H1 (cell line): ENCODE measurements at regions of chr22 and their contacts with region 1.

Region 1: DNA sequence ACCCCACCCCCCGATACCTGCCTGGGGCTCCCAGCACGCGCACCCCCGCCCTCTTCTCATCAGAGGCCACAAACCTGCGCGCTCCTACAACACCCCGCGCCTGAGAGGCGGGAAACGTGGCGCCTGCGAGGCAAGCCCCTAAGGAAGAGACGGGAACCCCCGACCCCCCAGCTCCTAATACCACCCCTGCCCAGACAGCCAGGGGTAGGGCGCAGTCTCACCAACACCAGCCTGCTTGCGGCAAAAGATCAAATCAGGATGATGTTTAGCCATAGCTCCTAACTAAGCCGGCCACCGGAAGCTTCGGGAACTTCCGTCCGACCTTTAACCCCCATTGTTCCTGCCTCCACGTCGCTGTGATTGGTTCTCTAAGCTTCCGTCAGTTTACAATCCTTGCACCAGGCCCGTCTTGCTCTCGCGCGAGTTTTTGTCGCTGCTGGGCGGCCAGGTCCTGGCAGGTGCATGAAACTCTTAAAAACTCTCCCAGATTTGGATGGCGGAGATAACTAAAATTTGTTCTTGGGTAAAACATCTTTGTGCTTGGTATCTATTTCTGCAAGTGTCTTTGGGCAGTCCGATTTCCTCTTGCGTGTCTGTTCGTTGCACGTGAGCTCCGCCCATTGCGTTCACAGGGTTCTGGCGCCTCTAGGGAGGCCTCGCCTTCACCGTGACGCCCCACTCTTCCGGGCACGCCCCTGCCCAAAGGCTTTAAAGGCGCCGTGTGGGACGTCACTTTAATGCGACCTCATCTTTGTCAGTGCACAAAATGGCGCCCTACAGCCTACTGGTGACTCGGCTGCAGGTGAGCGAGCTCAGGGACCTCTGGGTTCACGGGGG is at the starts of genes ACO2 and PHF5A:
- DNase-seq: peak; percentile 85 to 99
- H3K4me3 ChIP-seq: peak within 1 kb of the TSS; percentile 74 to 93 (median 80)
- H3K27ac ChIP-seq: peak within 1 kb of the TSS; percentile 98
- H3K4me1 ChIP-seq: peaks cover 0 to 9% (median 7%) of the 10 kb centered on the region in 4 experiments; a peak in 4 of 7 replicates
- H3K27me3 ChIP-seq: no peaks in the 10 kb centered on the region
- CTCF ChIP-seq: no peak
- EP300 ChIP-seq: no peak
- POLR2A ChIP-seq: peak; percentile 69 to 91
- RAD21 ChIP-seq: no peak; a peak in 1 of 4 replicates
- total RNA-seq, gene ACO2: 72.4 and 75.4 TPM in 2 replicates
- total RNA-seq, gene PHF5A: 109 and 135 TPM in 2 replicates

Region 2: DNA sequence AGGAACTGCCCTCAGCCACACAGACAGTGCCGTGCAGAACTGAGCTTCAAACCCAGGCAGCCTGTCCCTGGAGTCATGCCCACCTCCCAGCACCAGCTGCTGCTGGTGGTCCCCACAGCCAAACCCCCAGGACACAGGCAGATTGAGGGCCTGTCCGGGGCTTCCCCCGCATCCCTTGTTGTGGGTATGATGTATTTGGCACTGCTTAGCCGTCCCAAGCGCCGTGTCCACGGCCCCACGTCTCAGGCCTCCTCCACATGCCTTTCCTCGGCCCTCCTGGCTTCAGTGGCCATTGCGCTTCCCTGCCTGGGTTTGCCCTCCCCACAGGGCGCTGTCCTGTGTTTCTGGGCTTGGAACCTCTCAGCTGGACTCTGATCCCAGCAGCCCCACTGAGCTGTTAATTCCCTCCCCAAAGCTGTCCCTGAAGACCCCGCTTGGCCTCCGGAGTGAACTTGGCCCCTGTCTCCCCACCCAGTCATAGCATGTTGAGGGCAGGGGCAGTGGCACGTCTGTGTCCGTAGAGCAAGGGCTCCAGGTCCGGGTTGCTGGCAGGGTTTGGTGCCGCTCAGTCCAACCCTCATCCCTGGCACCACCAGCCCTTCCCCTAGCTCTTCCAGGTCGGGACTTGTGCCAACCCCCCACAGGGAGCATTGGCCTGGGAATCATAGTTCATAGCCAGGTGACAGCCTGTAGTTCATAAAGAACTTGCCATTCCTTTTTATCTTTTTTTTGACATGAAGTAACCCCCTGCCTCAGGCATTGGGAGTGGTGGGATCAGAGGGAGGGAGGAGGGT is 121.3 kb before region 1 on chr22:
- CTCF ChIA-PET with region 1: no interaction called
- POLR2A ChIA-PET with region 1: no interaction called
- DNase-seq: no peak
- H3K4me3 ChIP-seq: no peak overlapping the region
- H3K27ac ChIP-seq: no peak overlapping the region
- H3K4me1 ChIP-seq: no peaks in the 10 kb centered on the region
- H3K27me3 ChIP-seq: no peaks in the 10 kb centered on the region; a peak in 1 of 7 replicates
- CTCF ChIP-seq: no peak
- EP300 ChIP-seq: no peak
- POLR2A ChIP-seq: no peak
- RAD21 ChIP-seq: no peak

Region 3: GRCh38 chr22:41403532-41404318 is 64.9 kb before region 1 on chr22:
- CTCF ChIA-PET with region 1: interaction called, 11 read pairs
- POLR2A ChIA-PET with region 1: interaction called, 8 read pairs
- DNase-seq: peak; percentile 66 to 90
- H3K4me3 ChIP-seq: no peak overlapping the region
- H3K27ac ChIP-seq: no peak overlapping the region
- H3K4me1 ChIP-seq: peaks cover 0 to under 1% (median 0%) of the 10 kb centered on the region in 4 experiments; a peak in 1 of 7 replicates
- H3K27me3 ChIP-seq: no peaks in the 10 kb centered on the region
- CTCF ChIP-seq: peak; percentile 95 to 100 (median 99)
- EP300 ChIP-seq: no peak
- POLR2A ChIP-seq: no peak
- RAD21 ChIP-seq: peak; percentile 99

Region 4: GRCh38 chr22:41479671-41480396 is 11.2 kb after region 1 on chr22:
- CTCF ChIA-PET with region 1: interaction called, 20 read pairs
- POLR2A ChIA-PET with region 1: interaction called, 887 read pairs
- DNase-seq: peak; percentile 21 to 61
- H3K4me3 ChIP-seq: peak overlapping the region in 2 of 4 experiments; percentile 0 to 11; a peak in 2 of 8 replicates
- H3K27ac ChIP-seq: peak overlapping the region; percentile 20; the same call in 1 of the 2 replicates
- H3K4me1 ChIP-seq: peaks cover 24 to 39% (median 26%) of the 10 kb centered on the region in 4 experiments
- H3K27me3 ChIP-seq: no peaks in the 10 kb centered on the region
- CTCF ChIP-seq: peak in 2 of 3 experiments; percentile 28 to 41; a peak in 2 of 4 replicates
- EP300 ChIP-seq: no peak
- POLR2A ChIP-seq: no peak
- RAD21 ChIP-seq: peak; percentile 17 to 21; a peak in 2 of 4 replicates

Region 5: GRCh38 chr22:41491374-41492100 is 22.9 kb after region 1 on chr22:
- CTCF ChIA-PET with region 1: interaction called, 6 read pairs
- POLR2A ChIA-PET with region 1: interaction called, 17 read pairs
- DNase-seq: no peak
- H3K4me3 ChIP-seq: no peak overlapping the region
- H3K27ac ChIP-seq: no peak overlapping the region
- H3K4me1 ChIP-seq: peaks cover 4 to 21% (median 14%) of the 10 kb centered on the region in 4 experiments; a peak in 6 of 7 replicates
- H3K27me3 ChIP-seq: no peaks in the 10 kb centered on the region
- CTCF ChIP-seq: no peak
- EP300 ChIP-seq: no peak
- POLR2A ChIP-seq: no peak
- RAD21 ChIP-seq: no peak

Region 6: GRCh38 chr22:41501209-41501608 is 32.6 kb after region 1 on chr22:
- CTCF ChIA-PET with region 1: interaction called, 6 read pairs
- POLR2A ChIA-PET with region 1: interaction called, 22 read pairs
- DNase-seq: no peak
- H3K4me3 ChIP-seq: no peak overlapping the region
- H3K27ac ChIP-seq: no peak overlapping the region
- H3K4me1 ChIP-seq: no peaks in the 10 kb centered on the region
- H3K27me3 ChIP-seq: no peaks in the 10 kb centered on the region
- CTCF ChIP-seq: peak; percentile 57 to 64 (median 59)
- EP300 ChIP-seq: no peak
- POLR2A ChIP-seq: no peak
- RAD21 ChIP-seq: peak; percentile 75 to 78

Region 7: GRCh38 chr22:41508770-41509170 is 40.2 kb after region 1 on chr22:
- CTCF ChIA-PET with region 1: interaction called, 4 read pairs
- POLR2A ChIA-PET with region 1: interaction called, 19 read pairs
- DNase-seq: no peak
- H3K4me3 ChIP-seq: no peak overlapping the region
- H3K27ac ChIP-seq: no peak overlapping the region
- H3K4me1 ChIP-seq: peaks cover 4 to 15% (median 13%) of the 10 kb centered on the region in 4 experiments
- H3K27me3 ChIP-seq: no peaks in the 10 kb centered on the region
- CTCF ChIP-seq: peak in 1 of 3 experiments; percentile 9; a peak in 1 of 4 replicates
- EP300 ChIP-seq: no peak
- POLR2A ChIP-seq: no peak
- RAD21 ChIP-seq: no peak; a peak in 1 of 4 replicates

Region 8: DNA sequence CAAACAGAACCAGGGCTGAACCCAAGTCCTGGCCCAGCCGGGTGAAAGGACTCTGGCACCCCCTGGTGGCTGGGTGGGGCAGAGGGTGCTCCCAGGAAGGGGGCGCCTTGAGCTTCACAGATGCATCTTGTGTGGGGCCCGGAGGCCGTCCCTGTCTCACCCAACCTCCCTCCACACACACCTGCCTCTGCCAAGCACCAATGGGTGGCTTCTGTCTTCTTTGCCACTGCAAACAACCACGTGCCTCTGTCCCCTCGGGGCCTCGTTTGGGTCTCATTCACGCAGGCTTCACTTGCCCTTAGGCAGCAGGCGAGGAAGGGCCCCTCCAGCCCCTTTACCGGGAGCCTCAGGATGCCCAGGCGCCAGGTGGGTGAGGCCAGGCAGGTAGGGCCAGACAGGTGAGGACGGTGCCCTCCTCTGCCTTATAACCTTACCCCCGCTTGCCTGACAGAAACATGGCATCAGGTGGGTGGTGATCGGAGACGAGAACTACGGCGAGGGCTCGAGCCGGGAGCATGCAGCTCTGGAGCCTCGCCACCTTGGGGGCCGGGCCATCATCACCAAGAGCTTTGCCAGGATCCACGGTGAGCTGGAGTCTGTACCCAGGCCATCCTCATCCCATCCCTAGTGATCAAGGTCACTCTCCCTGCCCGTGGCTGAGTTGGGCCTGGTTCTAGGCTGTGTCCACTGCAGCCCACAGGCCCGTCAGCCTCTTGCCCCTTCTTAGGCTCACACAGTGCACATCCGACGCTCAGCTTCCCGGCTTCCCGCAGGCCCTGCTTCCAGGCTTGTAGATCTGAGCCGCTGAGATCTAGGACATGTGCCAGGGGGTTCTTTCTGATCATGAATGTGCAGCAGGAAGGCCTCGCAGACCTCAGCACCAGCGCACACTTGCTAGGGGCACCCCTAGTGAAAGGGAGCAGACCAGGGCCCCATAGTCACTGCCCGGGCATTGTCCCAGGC is 58.5 kb after region 1 on chr22:
- CTCF ChIA-PET with region 1: interaction called, 9 read pairs
- POLR2A ChIA-PET with region 1: interaction called, 11 read pairs
- DNase-seq: peak in 1 of 2 experiments; percentile 90
- H3K4me3 ChIP-seq: no peak overlapping the region
- H3K27ac ChIP-seq: no peak overlapping the region
- H3K4me1 ChIP-seq: no peaks in the 10 kb centered on the region; a peak in 1 of 7 replicates
- H3K27me3 ChIP-seq: no peaks in the 10 kb centered on the region
- CTCF ChIP-seq: peak; percentile 76 to 91 (median 85)
- EP300 ChIP-seq: no peak
- POLR2A ChIP-seq: peak in 1 of 2 experiments; percentile 62; a peak in 1 of 3 replicates
- RAD21 ChIP-seq: peak; percentile 70 to 76